ENCODE measurements at regions of chr6 and their contacts with region 1.

Region 1: GRCh38 chr6:117265410-117266256 is at the start of gene VGLL2:
- DNase-seq: peak; percentile 78 to 85
- ATAC-seq: peak; percentile 65 to 69
- H3K4me3 ChIP-seq: peak within 1 kb of the TSS; percentile 69 to 91 (median 84)
- H3K27ac ChIP-seq: peak within 1 kb of the TSS; percentile 90 to 99 (median 97)
- H3K4me1 ChIP-seq: peaks cover 10 to 31% of the 10 kb centered on the region in 2 donors
- H3K27me3 ChIP-seq: peaks cover 0 to 4% (median 0%) of the 10 kb centered on the region in 3 donors
- CTCF ChIP-seq: peak in 3 of 5 experiments; percentile 7 to 55 (median 46)
- POLR2A ChIP-seq: peak; percentile 79 to 92
- total RNA-seq, gene VGLL2: 4.9 to 27.5 (median 10.1) TPM

Region 2: DNA sequence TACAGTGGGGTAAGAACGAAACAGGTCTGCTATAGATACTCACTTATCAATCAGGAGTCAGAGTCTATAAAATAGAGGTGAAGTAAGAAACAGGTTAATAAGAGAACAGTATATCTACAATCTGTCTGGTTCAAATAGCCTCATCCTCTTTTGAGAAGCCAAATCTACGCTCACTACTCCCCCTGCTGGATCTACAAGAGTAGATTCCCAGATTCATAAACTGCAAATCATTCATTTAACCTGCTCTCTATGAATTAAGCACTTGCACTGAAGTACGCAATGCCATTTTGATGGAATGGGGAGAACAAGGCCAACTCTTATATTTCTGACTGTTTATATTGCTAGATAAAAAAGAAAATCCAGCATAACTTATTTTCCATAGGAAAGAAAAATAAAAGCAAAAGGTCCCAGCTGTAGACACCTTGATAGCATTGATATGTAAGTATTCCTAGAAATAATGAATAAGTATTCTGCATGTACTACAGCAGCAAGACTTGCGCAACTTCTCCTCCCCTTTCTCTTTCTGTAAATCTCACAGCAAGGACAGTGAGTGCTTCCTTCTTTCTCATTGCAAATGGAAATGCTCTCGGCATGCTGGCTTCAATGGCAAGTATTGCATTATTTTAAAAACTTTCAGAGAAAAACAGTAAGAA is 296.3 kb before region 1 on chr6:
- in situ Hi-C with region 1: loop called in 1 of 4 experiments (anchors 5 kb)
- intact Hi-C with region 1: loop called (anchors 1 kb)
- DNase-seq: peak in 1 of 2 donors; percentile 5
- ATAC-seq: peak in 1 of 2 donors; percentile 53
- H3K4me3 ChIP-seq: no peak overlapping the region
- H3K27ac ChIP-seq: no peak overlapping the region
- H3K4me1 ChIP-seq: peaks cover 9 to 13% of the 10 kb centered on the region in 2 donors
- H3K27me3 ChIP-seq: no peaks in the 10 kb centered on the region
- CTCF ChIP-seq: peak; percentile 35 to 72 (median 44)
- POLR2A ChIP-seq: no peak

Region 3: GRCh38 chr6:117138920-117139319 is 126.7 kb before region 1 on chr6:
- in situ Hi-C with region 1: no loop called
- intact Hi-C with region 1: loop called (anchors 2 kb)
- DNase-seq: peak; percentile 74 to 76
- ATAC-seq: peak; percentile 65 to 73
- H3K4me3 ChIP-seq: no peak overlapping the region
- H3K27ac ChIP-seq: peak overlapping the region; percentile 88 to 94 (median 92)
- H3K4me1 ChIP-seq: peaks cover 27 to 36% of the 10 kb centered on the region in 2 donors
- H3K27me3 ChIP-seq: no peaks in the 10 kb centered on the region
- CTCF ChIP-seq: no peak
- POLR2A ChIP-seq: no peak

Region 4: DNA sequence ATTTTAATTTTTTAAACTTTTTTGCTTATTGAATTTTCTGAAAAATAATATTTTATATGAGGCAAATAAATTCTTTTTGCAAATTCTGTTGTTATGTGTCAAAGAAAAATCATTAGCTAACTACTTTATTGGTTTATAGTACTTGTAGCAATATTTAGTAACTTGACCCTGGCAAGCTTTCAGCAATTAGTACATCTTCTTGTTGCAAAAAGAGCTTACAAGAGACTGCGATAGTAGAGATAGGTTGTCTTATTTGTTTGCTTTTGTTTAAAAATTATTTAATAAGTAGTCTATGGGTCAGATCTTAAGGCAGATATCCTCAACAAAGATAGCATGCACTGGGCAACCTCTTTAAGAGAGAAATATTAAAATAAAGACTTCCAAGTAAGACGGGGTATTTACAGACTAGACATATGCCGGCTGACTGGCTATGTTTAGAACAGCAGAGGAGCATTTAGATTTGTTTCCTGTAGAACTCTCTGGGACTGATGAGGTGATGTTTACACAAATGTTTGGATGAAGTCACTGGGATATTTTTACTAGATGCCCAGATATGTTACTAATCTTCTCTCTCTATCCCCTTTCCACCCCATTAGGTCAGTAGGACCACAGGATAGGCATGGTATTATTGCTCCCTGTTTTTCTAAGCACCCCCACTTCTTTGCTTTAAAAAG is 24.7 kb after region 1 on chr6:
- in situ Hi-C with region 1: no loop called
- intact Hi-C with region 1: no loop called
- DNase-seq: peak in 1 of 2 donors; percentile 25
- ATAC-seq: peak; percentile 94 to 96
- H3K4me3 ChIP-seq: peak overlapping the region in 3 of 4 donors; percentile 16 to 36 (median 28)
- H3K27ac ChIP-seq: peak overlapping the region; percentile 75 to 84 (median 78)
- H3K4me1 ChIP-seq: peaks cover 31 to 40% of the 10 kb centered on the region in 2 donors
- H3K27me3 ChIP-seq: no peaks in the 10 kb centered on the region
- CTCF ChIP-seq: no peak
- POLR2A ChIP-seq: peak; percentile 32 to 83

Region 5: GRCh38 chr6:117304446-117304845 is 38.8 kb after region 1 on chr6:
- in situ Hi-C with region 1: no loop called
- intact Hi-C with region 1: loop called (anchors 5 kb)
- DNase-seq: no peak
- ATAC-seq: no peak
- H3K4me3 ChIP-seq: no peak overlapping the region
- H3K27ac ChIP-seq: peak overlapping the region in 3 of 4 donors; percentile 80 to 93 (median 81)
- H3K4me1 ChIP-seq: peaks cover 27 to 29% of the 10 kb centered on the region in 2 donors
- H3K27me3 ChIP-seq: no peaks in the 10 kb centered on the region
- CTCF ChIP-seq: no peak
- POLR2A ChIP-seq: no peak

Region 6: DNA sequence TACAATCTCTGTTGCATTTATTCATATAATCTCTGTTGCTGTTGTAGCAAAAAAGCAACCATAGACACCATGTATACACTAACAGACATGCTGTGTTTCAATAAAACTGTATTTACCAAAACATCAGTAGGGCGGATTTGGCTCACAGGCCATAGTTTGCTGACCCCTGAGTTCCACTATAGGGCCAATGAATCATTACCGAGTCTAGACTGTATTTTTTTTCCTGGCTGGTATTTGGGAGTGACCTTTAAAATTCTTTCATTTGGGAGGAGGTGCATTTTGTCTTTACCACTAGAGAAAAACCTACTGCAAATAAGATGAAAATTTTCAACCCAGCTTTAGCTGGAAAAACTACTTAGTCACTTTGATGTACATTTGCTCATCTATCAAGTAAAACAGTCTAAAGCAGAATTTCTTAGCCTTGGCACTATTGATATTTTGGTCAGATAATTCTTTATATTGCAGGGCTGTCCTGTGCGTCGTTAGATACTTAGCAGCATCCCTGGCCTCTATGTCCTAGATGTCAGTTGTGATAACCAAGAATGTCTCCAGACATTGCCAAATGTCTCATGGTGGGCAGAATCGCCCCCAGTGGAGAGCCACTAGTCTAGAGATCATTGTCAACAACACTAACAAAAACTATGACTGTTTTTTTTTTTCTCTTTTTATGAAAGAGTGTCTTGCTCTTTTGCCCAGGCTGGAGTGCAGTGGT is 256.3 kb after region 1 on chr6:
- in situ Hi-C with region 1: no loop called
- intact Hi-C with region 1: no loop called
- DNase-seq: no peak
- ATAC-seq: no peak
- H3K4me3 ChIP-seq: no peak overlapping the region
- H3K27ac ChIP-seq: no peak overlapping the region
- H3K4me1 ChIP-seq: no peaks in the 10 kb centered on the region
- H3K27me3 ChIP-seq: no peaks in the 10 kb centered on the region
- CTCF ChIP-seq: no peak
- POLR2A ChIP-seq: no peak

Region 7: GRCh38 chr6:118551063-118552053 is 1285.7 kb after region 1 on chr6:
- in situ Hi-C with region 1: no loop called
- intact Hi-C with region 1: loop called (anchors 10 kb)
- DNase-seq: no peak
- ATAC-seq: peak; percentile 78 to 81
- H3K4me3 ChIP-seq: peak overlapping the region; percentile 34 to 65 (median 52)
- H3K27ac ChIP-seq: peak overlapping the region; percentile 88 to 95 (median 94)
- H3K4me1 ChIP-seq: peaks cover 58 to 63% of the 10 kb centered on the region in 2 donors
- H3K27me3 ChIP-seq: no peaks in the 10 kb centered on the region
- CTCF ChIP-seq: peak; percentile 56 to 75 (median 72)
- POLR2A ChIP-seq: no peak

Measured in gastrocnemius medialis (tissue), 4 donors.